Left colon (tissue), 2 donors: ENCODE measurements at regions of chr17 and their contacts with region 1.

Region 1: GRCh38 chr17:9802305-9803096 is 11.1 kb upstream of the DHRS7C start:
- DNase-seq: no peak
- ATAC-seq: no peak

Region 2: GRCh38 chr17:9880582-9880999 is 78.1 kb after region 1 on chr17:
- intact Hi-C with region 1: loop called in 1 of 2 experiments (anchors 10 kb)
- DNase-seq: no peak
- ATAC-seq: no peak

Region 3: DNA sequence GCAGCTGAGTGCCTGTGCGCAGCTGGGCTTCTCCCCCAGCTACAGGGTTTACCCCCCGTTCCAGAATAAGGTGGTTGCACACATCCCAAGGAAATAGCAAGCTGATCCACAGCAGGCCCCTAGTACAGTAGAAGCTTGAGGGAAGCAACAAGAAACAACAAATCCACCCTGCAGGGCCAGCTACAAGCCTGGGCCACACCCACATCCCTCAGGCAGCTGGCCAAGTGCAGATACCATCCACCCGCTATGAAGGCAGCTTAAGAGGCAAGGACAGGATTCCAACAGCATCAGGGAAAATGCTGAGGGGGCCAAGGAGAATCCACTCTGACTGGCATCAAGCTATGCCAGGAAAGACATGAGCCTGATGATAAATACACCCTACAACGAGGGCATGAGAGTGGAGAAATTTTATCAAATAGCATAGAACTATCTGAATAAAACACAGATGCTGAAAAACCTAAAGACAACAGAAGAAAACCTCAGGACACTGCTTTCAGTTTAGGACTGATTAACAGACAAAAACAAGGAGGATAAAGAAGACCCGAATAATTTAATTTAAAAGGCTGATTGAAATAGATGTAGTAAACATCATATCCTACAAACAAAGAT is 169.6 kb after region 1 on chr17:
- intact Hi-C with region 1: no loop called
- DNase-seq: peak; percentile 60 to 75
- ATAC-seq: peak; percentile 77